ENCODE measurements at regions of chr11 and their contacts with region 1.

Region 1: DNA sequence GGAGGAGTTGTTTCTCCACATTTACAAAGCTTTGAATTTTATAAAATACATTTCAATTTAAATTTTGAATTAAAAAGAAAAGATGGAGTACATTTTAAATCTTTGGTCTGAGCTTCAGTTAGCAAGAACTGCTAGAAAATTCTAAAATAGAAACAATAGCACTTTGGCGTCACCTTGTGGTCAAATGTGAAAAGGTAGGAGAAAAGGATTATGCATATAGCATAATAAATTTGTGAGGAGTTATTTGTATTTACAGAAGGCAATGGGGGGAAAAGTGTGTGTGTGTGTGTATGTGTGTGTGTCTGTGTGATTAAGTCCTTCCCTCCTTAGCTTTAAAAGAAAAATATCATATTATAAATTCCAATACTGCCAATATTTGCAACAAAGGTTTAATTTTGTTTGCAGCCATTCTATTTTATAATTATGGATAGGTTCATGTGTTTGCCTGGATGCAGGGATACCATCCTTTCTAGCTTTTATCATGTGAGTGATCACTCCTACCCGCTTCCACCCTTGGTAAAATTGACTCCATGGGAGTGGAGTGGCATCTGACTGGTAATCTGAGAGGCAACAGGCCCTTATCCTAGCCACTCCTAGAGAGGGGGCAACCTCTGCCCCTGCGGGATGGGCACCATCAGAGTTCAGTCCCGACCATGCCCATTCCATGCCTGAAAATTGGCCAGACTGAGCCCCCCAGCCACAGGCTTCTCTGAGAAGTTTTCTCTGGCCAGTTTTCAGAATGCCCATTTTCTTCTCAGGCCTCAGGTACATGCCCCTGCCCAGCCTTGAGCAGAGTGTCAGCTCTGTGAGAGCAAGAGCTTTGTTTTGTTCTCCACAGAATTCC is 13.6 kb upstream of the LGR4 start:
- DNase-seq: peak; percentile 74
- H3K4me3 ChIP-seq: no peak overlapping the region
- H3K27ac ChIP-seq: no peak overlapping the region
- H3K4me1 ChIP-seq: no peaks in the 10 kb centered on the region
- H3K27me3 ChIP-seq: no peaks in the 10 kb centered on the region
- CTCF ChIP-seq: peak; percentile 92

Region 2: GRCh38 chr11:27296497-27296896 is 189.7 kb before region 1 on chr11:
- intact Hi-C with region 1: loop called (anchors 5 kb)
- DNase-seq: no peak
- H3K4me3 ChIP-seq: no peak overlapping the region
- H3K27ac ChIP-seq: no peak overlapping the region
- H3K4me1 ChIP-seq: peaks cover 5% of the 10 kb centered on the region
- H3K27me3 ChIP-seq: no peaks in the 10 kb centered on the region
- CTCF ChIP-seq: peak; percentile 35

Region 3: DNA sequence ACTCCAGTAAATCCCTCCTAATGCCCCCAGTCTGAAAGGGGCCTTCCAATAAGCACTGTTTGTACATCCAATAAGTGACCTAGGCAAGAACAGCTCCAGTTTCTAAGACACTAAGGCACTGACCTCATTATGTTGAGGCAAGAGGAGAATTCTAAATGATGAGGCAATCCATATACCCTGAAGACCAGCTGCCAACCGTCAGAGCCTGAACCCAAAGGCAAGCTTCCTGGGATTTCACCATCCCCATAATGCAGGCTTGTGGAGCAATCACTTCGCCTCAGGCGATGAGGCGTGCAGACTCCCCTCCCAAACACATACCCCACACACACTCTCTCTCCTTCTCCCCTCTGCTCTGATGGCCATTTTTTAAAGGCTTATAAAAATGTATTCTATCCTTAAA is 63.0 kb before region 1 on chr11:
- intact Hi-C with region 1: no loop called
- DNase-seq: peak; percentile 31
- H3K4me3 ChIP-seq: no peak overlapping the region
- H3K27ac ChIP-seq: no peak overlapping the region
- H3K4me1 ChIP-seq: no peaks in the 10 kb centered on the region
- H3K27me3 ChIP-seq: no peaks in the 10 kb centered on the region
- CTCF ChIP-seq: no peak